ENCODE measurements at regions of chr19 and their contacts with region 1.

Region 1: DNA sequence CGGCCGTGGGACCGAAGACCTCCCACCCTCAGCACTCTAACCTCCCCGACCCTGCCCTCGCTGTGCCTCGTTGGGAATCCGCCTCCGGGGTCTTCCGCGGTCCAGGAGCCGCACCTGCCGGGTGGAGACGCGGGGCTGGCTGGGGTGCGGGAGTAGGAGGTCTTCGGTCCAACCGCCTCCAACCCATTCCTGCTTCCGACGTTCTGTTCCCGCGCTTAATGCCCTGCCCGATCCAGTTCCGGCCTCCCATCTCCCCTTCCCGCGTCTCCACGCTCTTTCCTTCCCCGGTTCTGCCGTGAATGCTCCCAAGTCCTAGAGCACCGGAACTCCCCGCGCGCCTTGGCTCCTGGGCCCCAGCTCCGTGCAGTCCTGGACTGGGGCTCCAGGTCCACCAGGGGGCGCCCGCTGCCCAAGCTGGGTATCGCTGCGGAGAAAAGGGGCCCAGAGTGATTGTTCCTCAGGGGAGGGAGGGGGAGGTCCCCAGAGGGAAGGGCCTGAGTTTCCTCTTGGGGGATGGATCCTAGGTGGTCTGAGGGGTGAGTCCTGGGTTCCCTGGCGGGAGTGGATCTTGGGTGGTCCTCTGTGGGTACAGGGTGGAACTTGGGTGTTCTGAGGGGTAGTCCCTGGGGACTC is 14.1 kb upstream of the TNFSF9 start:
- DNase-seq: peak; percentile 96
- ATAC-seq: peak; percentile 82
- H3K4me3 Mint-ChIP-seq: peak overlapping the region; percentile 91
- H3K27ac Mint-ChIP-seq: peak overlapping the region; percentile 82; the same call in 1 of the 2 replicates
- H3K4me1 Mint-ChIP-seq: peaks cover 12% of the 10 kb centered on the region
- H3K27me3 Mint-ChIP-seq: peaks cover 20% of the 10 kb centered on the region
- CTCF ChIP-seq: peak; percentile 94

Region 2: DNA sequence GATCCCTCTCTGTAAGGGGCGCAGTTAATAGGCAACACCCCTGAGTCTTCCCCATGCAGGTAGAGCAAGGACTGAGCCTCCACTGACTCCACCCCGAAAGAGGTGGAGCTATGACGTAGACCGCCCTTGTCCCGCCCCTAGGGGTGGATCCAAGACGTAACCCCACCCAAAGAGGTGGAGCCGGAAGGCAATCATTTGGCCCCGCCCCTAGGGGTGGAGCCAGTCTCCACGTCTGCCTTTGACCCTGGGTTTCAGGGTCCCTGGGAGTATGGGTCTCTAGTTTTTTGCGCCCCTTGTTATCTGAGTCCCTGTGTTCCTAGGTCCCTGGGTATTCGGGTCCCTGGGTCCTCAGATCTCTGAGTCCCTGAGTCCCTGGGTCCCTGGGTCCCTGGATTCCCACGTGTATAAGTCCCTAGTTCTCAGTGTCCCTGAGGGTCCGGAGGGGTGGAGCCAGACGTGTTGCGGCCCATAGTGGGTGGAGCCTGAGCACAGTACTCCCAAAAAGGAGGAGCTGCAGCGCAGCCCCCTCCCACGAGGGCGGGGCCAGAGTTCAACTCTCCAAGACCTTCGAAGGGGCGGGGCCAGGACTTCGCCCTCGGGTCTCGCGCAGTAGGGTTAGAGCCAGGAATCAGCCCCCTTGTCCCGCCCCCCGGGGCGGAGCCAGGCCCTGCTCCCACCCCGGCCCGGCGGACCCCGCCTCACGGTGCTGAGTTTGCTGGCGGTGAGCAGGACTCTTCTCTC is 40.5 kb before region 1 on chr19:
- CTCF ChIA-PET with region 1: interaction called, 11 read pairs
- POLR2A ChIA-PET with region 1: no interaction called
- DNase-seq: peak; percentile 100
- ATAC-seq: peak; percentile 88
- H3K4me3 Mint-ChIP-seq: peak overlapping the region; percentile 81
- H3K27ac Mint-ChIP-seq: peak overlapping the region; percentile 95
- H3K4me1 Mint-ChIP-seq: peaks cover 8% of the 10 kb centered on the region
- H3K27me3 Mint-ChIP-seq: peaks cover 30% of the 10 kb centered on the region
- CTCF ChIP-seq: no peak

Region 3: GRCh38 chr19:6489278-6490061 is 27.3 kb before region 1 on chr19:
- CTCF ChIA-PET with region 1: no interaction called
- POLR2A ChIA-PET with region 1: no interaction called
- DNase-seq: no peak
- ATAC-seq: no peak
- H3K4me3 Mint-ChIP-seq: no peak overlapping the region
- H3K27ac Mint-ChIP-seq: no peak overlapping the region
- H3K4me1 Mint-ChIP-seq: no peaks in the 10 kb centered on the region
- H3K27me3 Mint-ChIP-seq: peaks cover 17% of the 10 kb centered on the region
- CTCF ChIP-seq: no peak

Region 4: GRCh38 chr19:6530386-6531161 is 13.8 kb after region 1 on chr19 and contains the start of gene TNFSF9:
- CTCF ChIA-PET with region 1: interaction called, 13 read pairs
- POLR2A ChIA-PET with region 1: interaction called, 4 read pairs
- DNase-seq: peak; percentile 86
- ATAC-seq: peak; percentile 49
- H3K4me3 Mint-ChIP-seq: peak within 1 kb of the TSS; percentile 74
- H3K27ac Mint-ChIP-seq: peak within 1 kb of the TSS; percentile 60
- H3K4me1 Mint-ChIP-seq: peaks cover 48% of the 10 kb centered on the region
- H3K27me3 Mint-ChIP-seq: peaks cover 77% of the 10 kb centered on the region
- CTCF ChIP-seq: no peak
- total RNA-seq, gene TNFSF9: 2.6 to 2.9 TPM (median 2.7 TPM) in 3 replicates

Region 5: GRCh38 chr19:6551607-6552450 is 35.1 kb after region 1 on chr19:
- CTCF ChIA-PET with region 1: interaction called, 14 read pairs
- POLR2A ChIA-PET with region 1: no interaction called
- DNase-seq: peak; percentile 82
- ATAC-seq: peak; percentile 98
- H3K4me3 Mint-ChIP-seq: peak overlapping the region; percentile 29; the same call in 1 of the 2 replicates
- H3K27ac Mint-ChIP-seq: no peak overlapping the region
- H3K4me1 Mint-ChIP-seq: peaks cover 4% of the 10 kb centered on the region
- H3K27me3 Mint-ChIP-seq: 0 out of 2 replicates have a peak, but pooled peaks cover 5% of the 10 kb centered on the region
- CTCF ChIP-seq: peak; percentile 45; the same call in 1 of the 2 replicates

Region 6: DNA sequence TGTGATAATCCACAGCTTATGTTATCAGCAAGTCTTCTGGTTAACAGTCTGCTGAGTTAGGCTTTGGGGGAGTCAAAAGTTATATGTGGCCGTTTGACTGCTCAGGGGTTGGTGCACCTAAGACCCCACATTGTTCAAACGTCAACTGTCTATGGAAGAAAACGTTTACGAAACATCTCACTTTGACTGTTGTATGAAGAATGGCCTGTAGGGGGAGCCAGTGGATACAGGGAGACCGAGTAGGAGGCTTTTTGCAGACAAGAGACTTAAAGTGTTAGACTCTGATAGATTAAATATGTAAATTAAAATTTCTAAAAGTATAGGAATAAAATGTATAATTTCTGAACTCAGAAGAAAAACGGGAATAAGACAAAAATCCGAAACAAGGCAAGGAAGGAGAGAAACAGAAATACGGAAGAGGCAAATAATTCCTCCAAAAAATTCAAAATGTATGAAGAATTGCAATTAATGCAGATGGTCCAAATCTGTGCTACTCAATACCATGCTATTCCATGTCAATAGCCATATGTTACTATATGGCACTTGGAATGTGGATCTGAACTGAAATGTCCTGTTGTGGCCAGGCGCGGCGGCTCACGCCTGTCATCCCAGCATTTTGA is 115.3 kb after region 1 on chr19:
- CTCF ChIA-PET with region 1: interaction called, 15 read pairs
- POLR2A ChIA-PET with region 1: no interaction called
- DNase-seq: peak; percentile 66
- ATAC-seq: no peak
- H3K4me3 Mint-ChIP-seq: no peak overlapping the region
- H3K27ac Mint-ChIP-seq: no peak overlapping the region
- H3K4me1 Mint-ChIP-seq: no peaks in the 10 kb centered on the region
- H3K27me3 Mint-ChIP-seq: peaks cover 16% of the 10 kb centered on the region
- CTCF ChIP-seq: peak; percentile 48

Region 7: DNA sequence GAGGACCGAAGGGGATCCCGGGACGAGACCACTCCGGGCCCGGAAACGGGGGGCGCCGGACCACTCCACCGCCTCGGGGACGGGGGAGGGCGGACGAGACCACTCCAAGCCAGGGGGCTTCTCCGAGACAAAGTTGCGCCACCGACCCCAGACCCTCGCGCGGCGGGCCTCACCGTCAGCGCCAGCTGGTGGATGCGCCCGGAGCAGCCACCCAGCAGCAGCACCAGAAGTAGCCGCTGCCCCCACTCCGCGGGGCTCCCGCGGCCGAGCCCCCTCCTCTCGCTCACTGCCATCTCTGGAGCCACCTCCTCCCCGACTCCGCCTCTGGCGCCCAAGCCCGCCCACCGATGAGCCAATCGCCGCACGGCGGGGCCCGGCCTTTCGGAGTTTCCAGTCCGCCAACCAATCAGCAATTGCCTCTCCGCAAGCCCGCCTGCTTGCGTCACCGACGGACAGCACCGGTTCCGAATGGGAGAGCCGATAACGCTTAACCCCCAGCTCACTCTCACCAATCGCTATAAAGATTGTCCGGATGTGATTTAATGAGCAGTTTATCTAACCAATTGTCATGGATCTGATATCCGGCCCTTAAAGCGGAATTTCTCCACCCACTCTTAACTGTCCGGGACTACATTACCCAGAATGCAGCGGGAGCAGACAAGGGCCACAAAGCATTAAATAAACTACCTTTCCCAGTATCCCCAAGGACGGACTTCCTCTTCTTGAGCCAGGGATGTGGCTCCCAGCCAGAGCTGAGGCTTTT is 220.7 kb after region 1 on chr19 and contains the start of gene GPR108:
- CTCF ChIA-PET with region 1: interaction called, 31 read pairs
- POLR2A ChIA-PET with region 1: no interaction called
- DNase-seq: peak; percentile 100
- ATAC-seq: peak; percentile 73
- H3K4me3 Mint-ChIP-seq: peak within 1 kb of the TSS; percentile 97
- H3K27ac Mint-ChIP-seq: peak within 1 kb of the TSS; percentile 97
- H3K4me1 Mint-ChIP-seq: peaks cover 45% of the 10 kb centered on the region
- H3K27me3 Mint-ChIP-seq: no peaks in the 10 kb centered on the region
- CTCF ChIP-seq: no peak
- total RNA-seq, gene GPR108: 48.7 to 59.5 TPM (median 54.2 TPM) in 3 replicates

Region 8: GRCh38 chr19:6862673-6863078 is 345.9 kb after region 1 on chr19:
- CTCF ChIA-PET with region 1: interaction called, 24 read pairs
- POLR2A ChIA-PET with region 1: no interaction called
- DNase-seq: peak; percentile 89
- ATAC-seq: peak; percentile 90
- H3K4me3 Mint-ChIP-seq: peak overlapping the region; percentile 65
- H3K27ac Mint-ChIP-seq: no peak overlapping the region
- H3K4me1 Mint-ChIP-seq: peaks cover 4% of the 10 kb centered on the region
- H3K27me3 Mint-ChIP-seq: peaks cover 3% of the 10 kb centered on the region; the same call in 1 of the 2 replicates
- CTCF ChIP-seq: peak; percentile 82